Posterior vena cava (tissue), 2 donors: ENCODE measurements at regions of chr18 and their contacts with region 1.

Region 1: GRCh38 chr18:47756364-47757016 is 174.0 kb downstream of the SMAD2 start:
- DNase-seq: no peak

Region 2: GRCh38 chr18:47215554-47216138 is 540.8 kb before region 1 on chr18:
- intact Hi-C with region 1: loop called in 1 of 2 experiments (anchors 10 kb)
- DNase-seq: no peak

Region 3: GRCh38 chr18:47632970-47633635 is 123.4 kb before region 1 on chr18:
- intact Hi-C with region 1: no loop called
- DNase-seq: no peak

Region 4: GRCh38 chr18:49021433-49022129 is 1265.1 kb after region 1 on chr18:
- intact Hi-C with region 1: no loop called
- DNase-seq: peak; percentile 87